ENCODE measurements at regions of chr1 and their contacts with region 1.

Region 1: DNA sequence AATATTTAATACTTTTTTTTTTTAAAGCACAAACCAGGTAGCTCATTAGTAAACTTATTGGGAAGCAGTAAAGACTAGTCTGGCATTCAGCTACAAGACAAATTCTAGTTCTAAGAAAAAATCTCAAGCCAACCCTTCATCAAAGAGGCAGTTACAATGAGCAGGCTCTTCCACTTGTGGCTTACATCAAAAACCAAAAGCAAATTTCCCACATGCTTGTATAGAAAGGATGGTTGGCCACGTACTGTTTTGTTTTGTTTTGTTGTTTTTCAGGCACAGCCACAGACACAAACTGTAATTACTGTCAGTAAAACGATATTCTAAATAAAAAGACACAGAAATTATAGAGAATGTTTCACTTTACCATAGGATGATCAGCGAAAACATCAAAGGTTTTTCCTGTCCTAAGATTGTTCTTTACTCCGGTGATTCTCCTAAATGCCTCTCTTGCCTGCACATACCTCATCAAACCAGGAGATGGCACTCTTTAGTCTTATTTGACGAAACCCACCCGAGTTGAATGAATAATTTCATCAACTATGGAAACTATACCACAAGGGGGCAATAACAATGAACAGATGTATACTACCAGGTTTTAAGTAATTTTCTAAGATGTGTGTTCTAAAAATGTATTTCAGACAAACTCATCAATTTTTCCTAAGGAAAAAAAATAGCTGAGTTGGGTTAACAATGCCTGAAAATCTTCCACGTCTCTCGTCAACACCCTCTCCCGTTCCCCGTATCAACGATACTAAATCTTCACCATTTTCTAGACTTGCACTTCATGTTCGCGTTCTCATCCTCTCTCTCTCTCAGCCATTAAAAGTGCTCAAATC is 26.9 kb downstream of the RPL5 start:
- H3K4me3 ChIP-seq: no peak overlapping the region
- H3K27ac ChIP-seq: no peak overlapping the region
- H3K4me1 ChIP-seq: no peaks in the 10 kb centered on the region
- CTCF ChIP-seq: peak; percentile 90

Region 2: DNA sequence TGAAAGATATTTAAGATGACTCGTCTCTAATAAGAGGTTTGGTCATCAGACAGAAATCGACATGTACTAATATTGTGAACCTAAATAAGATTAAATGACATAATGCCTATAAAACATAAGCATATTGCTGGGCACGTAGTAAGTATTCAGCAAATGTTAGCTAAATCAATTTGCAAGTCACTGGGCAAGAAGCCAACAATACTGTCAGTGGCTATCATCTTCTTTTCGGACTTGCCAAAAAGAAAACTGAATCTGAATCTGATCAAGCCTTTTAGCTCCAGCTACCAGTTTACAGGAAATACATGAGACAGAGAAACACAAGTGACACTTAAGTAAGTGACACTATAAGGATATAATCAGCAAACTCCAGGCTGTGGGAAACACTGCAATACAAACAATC is 19.0 kb after region 1 on chr1:
- CTCF ChIA-PET with region 1: interaction called, 40 read pairs
- POLR2A ChIA-PET with region 1: interaction called, 3 read pairs
- H3K4me3 ChIP-seq: no peak overlapping the region
- H3K27ac ChIP-seq: no peak overlapping the region
- H3K4me1 ChIP-seq: 0 out of 2 replicates have a peak, but pooled peaks cover 9% of the 10 kb centered on the region
- CTCF ChIP-seq: no peak

Region 3: DNA sequence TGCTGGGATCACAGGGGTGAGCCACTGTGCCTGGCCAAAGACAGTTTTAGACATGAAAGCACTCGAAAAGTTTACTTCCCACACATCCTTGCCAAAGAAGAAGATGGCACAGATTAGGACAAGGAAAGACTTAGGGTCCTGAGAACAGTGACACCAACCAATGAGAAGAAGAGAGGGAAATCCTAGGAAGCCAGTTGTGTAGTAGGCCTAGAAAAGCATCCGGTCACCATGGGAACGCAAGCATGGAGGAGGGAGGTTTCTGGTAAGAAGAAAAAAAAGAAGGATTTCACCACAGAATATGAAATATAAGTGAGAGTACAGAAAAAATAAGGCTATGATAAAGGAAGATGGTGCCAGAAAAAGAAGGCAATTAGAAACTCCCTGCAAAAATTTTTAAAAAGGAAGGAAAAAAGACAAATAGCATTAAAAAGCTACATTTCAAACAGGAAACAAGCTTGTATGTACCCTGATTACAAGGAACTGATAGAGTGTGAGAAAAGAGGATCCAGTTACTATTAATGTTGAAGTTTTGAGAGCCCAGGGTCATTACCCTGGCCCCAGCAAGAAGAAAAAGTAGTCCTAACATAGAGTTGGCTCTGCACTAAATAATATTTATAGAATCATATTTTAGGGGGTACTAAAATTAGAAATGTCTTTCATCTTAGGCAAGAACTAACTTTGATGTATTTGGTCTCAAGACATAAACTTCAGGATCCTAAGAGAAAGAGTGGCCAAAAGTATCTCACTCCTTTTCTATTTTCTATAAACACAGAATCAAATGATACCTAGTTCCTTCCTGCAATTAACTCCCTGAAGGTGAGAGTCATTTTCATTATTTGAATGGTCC is 86.3 kb after region 1 on chr1:
- CTCF ChIA-PET with region 1: interaction called, 14 read pairs
- POLR2A ChIA-PET with region 1: no interaction called
- H3K4me3 ChIP-seq: no peak overlapping the region
- H3K27ac ChIP-seq: no peak overlapping the region
- H3K4me1 ChIP-seq: peaks cover 9% of the 10 kb centered on the region; the same call in 1 of the 2 replicates
- CTCF ChIP-seq: no peak

Region 4: DNA sequence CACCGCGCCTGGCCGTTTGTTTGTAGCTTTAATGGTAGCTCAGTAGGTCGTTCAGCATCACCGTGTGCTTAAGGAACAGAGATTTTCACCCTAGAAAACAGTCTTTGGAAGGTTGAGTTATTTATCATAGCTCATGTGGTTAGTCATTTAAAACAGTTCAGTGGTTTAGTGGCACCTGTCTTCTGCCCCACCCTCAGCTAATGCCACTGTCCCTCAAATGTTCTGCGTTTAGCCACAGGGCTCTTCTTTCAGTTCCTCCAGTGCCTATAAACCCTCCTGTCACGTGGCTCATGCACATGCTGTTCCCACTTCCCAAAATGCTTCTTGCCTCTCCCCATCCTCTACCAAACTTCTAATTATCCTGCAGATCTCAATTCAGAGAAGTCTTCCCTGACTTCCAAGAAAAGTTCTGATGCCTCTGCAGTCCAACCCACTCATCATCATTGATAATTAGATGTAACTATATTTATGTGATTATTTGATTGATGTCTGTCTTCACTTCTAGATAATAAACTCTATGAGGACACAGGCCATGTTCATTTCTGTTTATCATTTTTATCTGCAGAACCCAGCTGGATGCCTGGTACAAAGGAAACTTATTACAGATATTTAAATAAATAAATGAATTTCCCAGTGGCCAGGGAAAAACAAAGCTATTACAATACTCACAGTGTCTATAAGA is 116.9 kb after region 1 on chr1:
- CTCF ChIA-PET with region 1: interaction called, 13 read pairs
- POLR2A ChIA-PET with region 1: no interaction called
- H3K4me3 ChIP-seq: no peak overlapping the region
- H3K27ac ChIP-seq: no peak overlapping the region
- H3K4me1 ChIP-seq: no peaks in the 10 kb centered on the region
- CTCF ChIP-seq: no peak

Region 5: DNA sequence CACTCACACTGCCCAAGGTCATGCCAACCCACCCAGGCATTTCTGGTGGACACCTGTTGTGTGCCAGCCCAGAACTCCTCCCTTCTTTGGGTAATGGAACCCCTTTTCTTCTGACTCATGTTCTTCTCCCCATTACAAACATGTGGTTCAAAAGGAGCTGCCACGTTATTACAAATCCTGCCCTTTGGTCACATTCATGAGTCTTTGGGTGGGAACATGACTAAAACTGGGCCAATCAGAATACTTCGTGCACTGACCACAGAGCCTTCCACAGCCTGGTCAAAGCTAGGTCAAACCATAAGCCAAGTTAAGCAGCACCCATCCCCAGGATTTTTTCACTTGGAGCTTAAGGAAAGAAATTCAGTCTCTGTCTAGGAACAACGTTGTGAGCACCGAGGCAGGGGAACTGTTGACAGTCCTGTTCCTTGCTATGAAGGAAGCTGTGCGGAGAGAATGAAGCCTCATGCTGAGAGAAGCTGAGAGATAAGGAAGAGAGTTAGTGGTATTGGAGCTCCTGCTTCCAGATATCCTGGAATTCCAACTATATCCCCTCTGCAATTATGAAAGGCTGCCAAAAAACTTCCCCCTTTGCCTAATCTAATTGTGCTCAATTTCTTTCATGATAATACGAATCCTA is 149.3 kb after region 1 on chr1:
- CTCF ChIA-PET with region 1: interaction called, 12 read pairs
- POLR2A ChIA-PET with region 1: no interaction called
- H3K4me3 ChIP-seq: no peak overlapping the region
- H3K27ac ChIP-seq: no peak overlapping the region
- H3K4me1 ChIP-seq: no peaks in the 10 kb centered on the region
- CTCF ChIP-seq: no peak

Measured in HEK293 (cell line).